ENCODE measurements at regions of chr1 and their contacts with region 1.

Region 1: GRCh38 chr1:67997746-67998145 is 52.7 kb downstream of the DIRAS3 start:
- DNase-seq: no peak
- H3K4me3 ChIP-seq: no peak overlapping the region
- CTCF ChIP-seq: no peak

Region 2: DNA sequence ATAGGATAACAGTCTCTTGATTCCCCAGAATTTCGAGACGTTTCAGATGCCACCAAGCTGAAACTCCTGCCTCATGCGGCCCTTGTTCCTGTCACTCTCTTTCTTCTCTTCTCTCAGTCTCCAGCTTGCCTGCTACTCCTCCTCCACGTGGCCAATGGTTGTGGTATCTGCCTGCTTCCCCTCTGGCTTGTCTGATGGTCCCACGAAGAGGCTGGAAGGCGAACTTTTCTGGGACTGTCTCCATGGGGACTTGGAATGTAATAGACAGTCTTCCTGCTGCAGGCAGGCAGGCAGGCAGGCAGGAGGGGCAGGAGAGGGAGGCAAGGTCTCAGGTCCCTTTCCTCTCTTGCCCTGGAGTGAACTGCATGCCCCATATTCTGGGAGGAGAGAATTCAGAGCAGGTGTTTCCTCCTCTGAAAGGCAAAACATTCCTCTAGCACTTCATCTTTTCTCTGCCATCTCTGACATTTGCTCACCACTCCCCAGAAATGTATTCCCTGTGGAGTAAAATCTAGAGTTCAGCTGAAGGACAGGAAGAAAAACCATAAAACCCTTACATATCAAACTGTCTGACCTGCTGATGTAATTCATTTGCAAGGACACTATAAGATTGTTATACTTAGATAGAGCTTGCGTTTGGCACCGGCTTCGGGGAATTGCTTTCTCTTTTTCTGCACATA is 100.3 kb before region 1 on chr1:
- in situ Hi-C with region 1: loop called (anchors 5 kb)
- DNase-seq: no peak
- H3K4me3 ChIP-seq: no peak overlapping the region
- CTCF ChIP-seq: no peak

Region 3: DNA sequence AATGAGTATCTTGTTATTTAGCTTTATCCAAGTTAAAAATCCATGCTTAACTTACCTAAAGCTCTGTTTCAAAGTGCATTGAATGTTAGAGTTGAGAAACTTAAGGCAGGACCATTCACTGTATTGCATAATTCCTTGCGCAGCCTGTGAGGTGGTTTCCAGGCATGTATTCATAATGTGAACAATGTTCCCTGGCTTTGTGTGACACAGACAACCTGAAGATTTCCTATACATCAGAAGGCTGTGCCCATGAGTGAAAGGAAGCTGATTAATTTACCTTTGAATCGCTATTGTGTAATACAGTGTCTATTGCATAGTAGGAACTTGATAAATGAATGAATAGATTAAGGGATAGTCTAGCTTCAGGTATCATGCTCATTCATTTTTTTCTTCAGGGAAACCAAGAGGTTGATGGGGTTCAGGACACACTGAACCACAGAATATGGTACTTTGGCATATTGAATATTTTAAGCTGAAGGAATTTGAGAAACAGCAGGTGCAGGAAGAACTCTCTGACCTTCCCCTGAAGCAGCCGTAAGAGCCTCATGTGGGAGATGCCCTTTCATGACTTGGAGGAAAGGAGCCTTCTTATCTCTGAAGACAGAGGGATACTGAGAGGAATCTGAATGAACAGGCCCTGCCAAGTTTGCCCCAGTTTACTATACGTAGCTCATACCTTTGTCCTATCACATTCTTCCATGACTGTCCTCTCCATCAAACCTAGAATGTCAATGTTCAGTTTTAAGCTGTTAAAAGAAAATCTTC is 75.8 kb before region 1 on chr1:
- in situ Hi-C with region 1: no loop called
- DNase-seq: no peak
- H3K4me3 ChIP-seq: no peak overlapping the region
- CTCF ChIP-seq: no peak

Region 4: DNA sequence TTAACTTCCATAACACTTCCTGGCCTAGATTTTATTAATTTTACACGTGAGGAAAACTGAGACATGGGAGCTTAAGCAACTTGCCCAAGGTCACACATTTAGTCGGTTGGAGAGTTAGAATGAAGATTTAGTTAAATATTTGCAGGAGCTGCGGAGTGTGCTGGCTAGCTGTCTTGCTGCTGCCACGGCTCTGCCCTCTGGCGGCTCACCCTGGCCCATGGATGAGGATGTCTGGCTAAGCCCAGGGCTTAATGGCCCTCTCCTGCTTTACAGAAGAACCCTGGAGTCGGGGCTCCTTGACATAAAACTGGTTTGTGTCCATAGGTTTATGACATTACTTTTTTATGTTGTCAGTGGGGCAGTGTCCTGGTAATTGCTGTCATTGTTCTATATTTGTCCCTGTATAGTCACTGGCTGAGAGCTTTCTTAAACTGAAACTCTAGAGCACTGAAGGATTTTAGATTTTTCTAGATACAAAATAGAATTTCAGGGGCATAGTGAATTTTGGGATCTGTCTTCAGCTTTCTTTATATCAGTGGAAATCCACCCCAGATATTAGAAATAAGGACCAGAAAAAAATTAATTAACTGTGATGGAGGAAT is 323.4 kb after region 1 on chr1:
- in situ Hi-C with region 1: no loop called
- DNase-seq: peak; percentile 33
- H3K4me3 ChIP-seq: no peak overlapping the region
- CTCF ChIP-seq: peak; percentile 87